ENCODE measurements at regions of chr1 and their contacts with region 1.

Region 1: GRCh38 chr1:53837924-53838652 is at the start of gene NDC1:
- DNase-seq: peak; percentile 86 to 89 (median 88)
- H3K4me3 ChIP-seq: peak within 1 kb of the TSS; percentile 83 to 93 (median 86)
- H3K4me3 Mint-ChIP-seq: peak within 1 kb of the TSS; percentile 93 to 98
- H3K27ac ChIP-seq: peak within 1 kb of the TSS; percentile 87 to 89
- H3K27ac Mint-ChIP-seq: peak within 1 kb of the TSS; percentile 94 to 99 (median 97)
- H3K4me1 ChIP-seq: peaks cover 8 to 16% of the 10 kb centered on the region in 2 donors
- H3K4me1 Mint-ChIP-seq: peaks cover 22% of the 10 kb centered on the region
- H3K27me3 ChIP-seq: no peaks in the 10 kb centered on the region
- H3K27me3 Mint-ChIP-seq: peaks cover 1 to 4% (median 2%) of the 10 kb centered on the region in 3 donors
- CTCF ChIP-seq: peak; percentile 5
- polyA plus RNA-seq, gene NDC1: 3.0 to 6.1 (median 4.7) TPM

Region 2: GRCh38 chr1:53889304-53890298 is 51.5 kb after region 1 on chr1 and contains the start of gene YIPF1:
- intact Hi-C with region 1: loop called in 1 of 2 experiments (anchors 5 kb)
- DNase-seq: peak; percentile 68 to 92 (median 81)
- H3K4me3 ChIP-seq: peak within 1 kb of the TSS; percentile 68 to 88 (median 82)
- H3K4me3 Mint-ChIP-seq: peak within 1 kb of the TSS; percentile 94 to 96
- H3K27ac ChIP-seq: peak within 1 kb of the TSS; percentile 72 to 83
- H3K27ac Mint-ChIP-seq: peak within 1 kb of the TSS; percentile 89 to 97 (median 96)
- H3K4me1 ChIP-seq: peaks cover 29 to 43% of the 10 kb centered on the region in 2 donors
- H3K4me1 Mint-ChIP-seq: peaks cover 48% of the 10 kb centered on the region
- H3K27me3 ChIP-seq: no peaks in the 10 kb centered on the region
- H3K27me3 Mint-ChIP-seq: peaks cover 0 to 2% (median 2%) of the 10 kb centered on the region in 3 donors
- CTCF ChIP-seq: no peak
- polyA plus RNA-seq, gene YIPF1: 24.4 to 51.9 (median 42.1) TPM